ENCODE measurements at regions of chr11 and their contacts with region 1.

Region 1: DNA sequence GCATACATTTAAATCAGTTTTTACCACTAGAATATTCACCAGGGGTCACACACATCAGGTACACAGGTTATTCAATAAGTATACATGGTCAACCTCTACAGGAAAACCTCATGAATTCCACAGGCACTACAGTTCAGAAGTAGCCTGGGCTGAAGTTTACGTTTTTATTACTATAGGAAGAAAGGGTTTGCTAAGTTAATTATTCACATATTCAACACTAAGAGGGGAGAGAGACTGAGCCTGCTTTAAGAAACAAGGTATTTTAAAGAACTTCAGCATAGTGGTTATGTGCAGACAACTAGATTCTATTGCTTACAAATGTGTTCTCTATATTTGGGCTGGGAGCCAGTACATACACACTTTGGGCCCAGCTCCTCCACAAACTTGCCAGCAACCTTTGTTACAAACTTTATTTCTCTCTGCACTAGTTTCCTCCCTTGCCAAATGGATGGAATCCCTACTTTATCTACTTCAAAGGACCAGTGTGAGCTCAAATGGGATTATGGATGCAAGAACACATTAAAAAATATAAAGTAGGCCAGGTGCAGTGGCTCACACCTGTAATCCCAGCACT is 31.9 kb downstream of the IL18BP start:
- DNase-seq: no peak
- H3K4me3 ChIP-seq: no peak overlapping the region
- H3K27ac ChIP-seq: no peak overlapping the region
- H3K4me1 ChIP-seq: peaks cover 14% of the 10 kb centered on the region
- CTCF ChIP-seq: no peak

Region 2: GRCh38 chr11:70942593-70942992 is 1088.0 kb before region 1 on chr11:
- CTCF ChIA-PET with region 1: no interaction called
- POLR2A ChIA-PET with region 1: no interaction called
- intact Hi-C with region 1: no loop called
- DNase-seq: peak; percentile 24
- H3K4me3 ChIP-seq: no peak overlapping the region
- H3K27ac ChIP-seq: no peak overlapping the region
- H3K4me1 ChIP-seq: no peaks in the 10 kb centered on the region
- CTCF ChIP-seq: peak; percentile 81

Region 3: GRCh38 chr11:72018171-72018570 is 12.4 kb before region 1 on chr11:
- CTCF ChIA-PET with region 1: no interaction called
- POLR2A ChIA-PET with region 1: interaction called, 13 read pairs
- intact Hi-C with region 1: no loop called
- DNase-seq: no peak
- H3K4me3 ChIP-seq: no peak overlapping the region
- H3K27ac ChIP-seq: no peak overlapping the region
- H3K4me1 ChIP-seq: no peaks in the 10 kb centered on the region
- CTCF ChIP-seq: no peak

Region 4: GRCh38 chr11:72091005-72091691 is 60.6 kb after region 1 on chr11:
- CTCF ChIA-PET with region 1: interaction called, 22 read pairs
- POLR2A ChIA-PET with region 1: interaction called, 5 read pairs
- intact Hi-C with region 1: loop called (anchors 1 kb)
- DNase-seq: peak; percentile 83
- H3K4me3 ChIP-seq: no peak overlapping the region
- H3K27ac ChIP-seq: no peak overlapping the region
- H3K4me1 ChIP-seq: peaks cover 6% of the 10 kb centered on the region
- CTCF ChIP-seq: peak; percentile 95

Region 5: GRCh38 chr11:72144807-72145560 is 114.4 kb after region 1 on chr11:
- CTCF ChIA-PET with region 1: interaction called, 3 read pairs
- POLR2A ChIA-PET with region 1: no interaction called
- intact Hi-C with region 1: loop called (anchors 1 kb)
- DNase-seq: no peak
- H3K4me3 ChIP-seq: no peak overlapping the region
- H3K27ac ChIP-seq: no peak overlapping the region
- H3K4me1 ChIP-seq: no peaks in the 10 kb centered on the region
- CTCF ChIP-seq: no peak